Activated CD4-positive, alpha-beta memory T cell treated with anti-CD3 and anti-CD28 coated beads, Interleukin-2, amount 10 ng/mL, durations not matched to agents 7 days and 5 days (primary cell): ENCODE measurements at regions of chr7 and their contacts with region 1.

Region 1: DNA sequence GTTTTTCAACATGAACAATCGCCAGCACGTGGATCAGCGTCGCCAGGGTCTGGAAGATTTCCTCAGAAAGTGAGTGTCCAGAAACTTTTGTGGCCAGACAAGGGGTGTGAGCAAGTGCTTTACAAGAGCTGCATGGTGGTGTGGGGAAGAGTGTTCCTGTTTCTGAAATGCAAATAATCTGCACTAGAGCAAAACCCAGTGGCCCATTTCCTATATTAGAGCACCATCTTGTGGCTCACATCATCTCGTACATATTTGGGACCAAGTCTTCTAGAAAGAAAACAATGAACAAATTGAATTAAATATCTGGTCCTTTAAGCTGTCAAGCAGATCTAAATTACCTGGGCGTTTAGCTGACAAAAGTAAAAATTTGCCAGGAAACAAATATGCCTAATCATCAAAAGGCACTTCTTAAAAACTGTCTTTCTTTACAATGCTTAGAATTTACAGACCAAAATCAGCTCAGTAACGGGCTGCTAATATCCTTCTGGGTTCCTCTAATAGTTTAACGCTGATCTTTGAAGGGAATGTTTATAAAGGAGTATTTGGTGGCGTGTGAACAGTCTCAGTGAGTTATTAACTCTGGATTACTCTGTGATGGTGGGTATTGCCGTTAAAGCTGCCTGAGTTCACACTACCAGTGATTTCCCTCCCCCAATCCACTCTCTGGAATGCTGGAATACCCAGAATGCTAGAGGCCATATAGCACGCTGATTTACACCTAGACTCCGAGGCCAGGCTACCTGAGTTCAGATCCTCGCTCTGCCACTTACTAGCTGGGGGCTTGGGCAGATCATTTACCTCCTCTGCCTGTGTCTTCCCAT is 73.6 kb downstream of the SNX10 start:
- DNase-seq: peak; percentile 58
- H3K4me3 Mint-ChIP-seq: no peak overlapping the region
- H3K27ac Mint-ChIP-seq: no peak overlapping the region
- H3K4me1 Mint-ChIP-seq: peaks cover 17% of the 10 kb centered on the region
- H3K27me3 Mint-ChIP-seq: no peaks in the 10 kb centered on the region

Region 2: DNA sequence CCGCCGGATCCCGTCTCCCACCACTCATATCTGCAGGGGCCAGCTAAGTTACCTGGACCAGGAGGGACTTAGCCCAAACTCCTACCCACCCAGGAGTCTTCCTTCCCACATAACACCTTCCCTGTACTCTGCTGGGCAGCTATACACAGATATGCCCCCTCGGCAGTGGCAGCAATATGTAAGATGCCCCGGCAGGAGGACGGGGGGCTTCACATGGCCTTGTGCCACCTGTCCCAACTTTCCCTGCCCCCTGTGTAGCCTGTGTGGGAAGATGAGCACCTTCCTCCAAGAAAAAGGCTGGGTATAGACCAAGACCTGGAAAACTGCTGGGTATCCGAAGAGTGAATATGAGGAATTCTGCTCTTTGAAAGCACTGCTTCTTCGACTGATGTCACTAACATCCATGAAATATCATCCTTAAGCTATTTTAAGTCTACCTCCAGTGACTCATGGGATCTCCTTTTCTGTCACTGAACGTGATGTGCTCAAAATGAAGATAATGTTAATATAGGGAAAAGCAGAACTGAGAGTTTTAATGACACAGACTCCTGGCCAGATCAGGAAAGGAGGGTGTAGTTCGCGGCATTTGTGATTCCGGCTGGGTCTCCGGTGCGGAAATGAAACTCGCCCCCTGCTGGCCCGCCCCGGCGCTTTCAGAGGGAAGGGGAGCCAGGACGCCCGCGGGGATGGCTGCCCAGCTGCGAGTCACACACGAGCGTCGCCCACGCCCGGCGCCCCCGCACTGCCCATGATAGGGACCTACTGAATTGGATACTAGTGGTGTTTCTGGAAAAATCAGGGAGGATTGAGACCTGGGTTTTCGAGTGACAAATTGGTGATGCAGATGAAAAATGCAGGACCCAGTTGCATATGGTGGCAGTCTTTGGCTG is 470.1 kb before region 1 on chr7:
- CTCF ChIA-PET with region 1: interaction called, 39 read pairs
- POLR2A ChIA-PET with region 1: interaction called, 7 read pairs
- DNase-seq: peak; percentile 62
- H3K4me3 Mint-ChIP-seq: no peak overlapping the region
- H3K27ac Mint-ChIP-seq: no peak overlapping the region
- H3K4me1 Mint-ChIP-seq: peaks cover 28% of the 10 kb centered on the region
- H3K27me3 Mint-ChIP-seq: peaks cover 4% of the 10 kb centered on the region

Region 3: DNA sequence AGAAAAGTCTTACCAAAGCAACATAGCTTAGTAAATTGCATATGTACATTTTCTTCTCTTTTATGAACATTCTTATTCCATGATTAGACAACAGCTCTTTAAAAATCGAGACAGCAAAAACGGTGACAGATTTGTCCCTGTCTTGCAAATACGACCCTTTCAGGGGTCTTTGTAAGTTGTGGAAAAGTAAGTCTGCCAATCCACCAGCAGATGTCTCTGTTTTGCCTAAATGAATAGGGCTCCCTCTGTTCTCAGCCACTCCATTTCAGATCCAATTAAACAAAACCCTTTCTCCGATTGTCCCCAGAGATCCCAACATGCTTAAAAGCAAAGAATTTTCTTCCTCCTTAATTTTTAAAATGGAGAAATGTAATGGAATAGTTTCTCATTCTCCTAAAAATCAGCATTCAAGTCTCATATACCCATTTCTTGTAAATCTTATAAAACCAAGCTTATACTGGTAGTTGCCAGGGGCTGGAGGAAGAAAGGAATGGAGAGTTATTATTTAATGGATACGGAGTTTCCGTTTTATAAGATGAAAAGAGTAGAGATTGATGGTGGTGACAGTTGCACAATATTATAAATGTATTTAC is 274.3 kb before region 1 on chr7:
- CTCF ChIA-PET with region 1: interaction called, 68 read pairs
- POLR2A ChIA-PET with region 1: no interaction called
- DNase-seq: no peak
- H3K4me3 Mint-ChIP-seq: no peak overlapping the region
- H3K27ac Mint-ChIP-seq: no peak overlapping the region
- H3K4me1 Mint-ChIP-seq: peaks cover 15% of the 10 kb centered on the region
- H3K27me3 Mint-ChIP-seq: no peaks in the 10 kb centered on the region

Region 4: GRCh38 chr7:26193432-26194207 is 171.7 kb before region 1 on chr7:
- CTCF ChIA-PET with region 1: interaction called, 20 read pairs
- POLR2A ChIA-PET with region 1: interaction called, 12 read pairs
- DNase-seq: no peak
- H3K4me3 Mint-ChIP-seq: peak overlapping the region; percentile 64
- H3K27ac Mint-ChIP-seq: peak overlapping the region; percentile 75
- H3K4me1 Mint-ChIP-seq: peaks cover 81% of the 10 kb centered on the region
- H3K27me3 Mint-ChIP-seq: no peaks in the 10 kb centered on the region

Region 5: DNA sequence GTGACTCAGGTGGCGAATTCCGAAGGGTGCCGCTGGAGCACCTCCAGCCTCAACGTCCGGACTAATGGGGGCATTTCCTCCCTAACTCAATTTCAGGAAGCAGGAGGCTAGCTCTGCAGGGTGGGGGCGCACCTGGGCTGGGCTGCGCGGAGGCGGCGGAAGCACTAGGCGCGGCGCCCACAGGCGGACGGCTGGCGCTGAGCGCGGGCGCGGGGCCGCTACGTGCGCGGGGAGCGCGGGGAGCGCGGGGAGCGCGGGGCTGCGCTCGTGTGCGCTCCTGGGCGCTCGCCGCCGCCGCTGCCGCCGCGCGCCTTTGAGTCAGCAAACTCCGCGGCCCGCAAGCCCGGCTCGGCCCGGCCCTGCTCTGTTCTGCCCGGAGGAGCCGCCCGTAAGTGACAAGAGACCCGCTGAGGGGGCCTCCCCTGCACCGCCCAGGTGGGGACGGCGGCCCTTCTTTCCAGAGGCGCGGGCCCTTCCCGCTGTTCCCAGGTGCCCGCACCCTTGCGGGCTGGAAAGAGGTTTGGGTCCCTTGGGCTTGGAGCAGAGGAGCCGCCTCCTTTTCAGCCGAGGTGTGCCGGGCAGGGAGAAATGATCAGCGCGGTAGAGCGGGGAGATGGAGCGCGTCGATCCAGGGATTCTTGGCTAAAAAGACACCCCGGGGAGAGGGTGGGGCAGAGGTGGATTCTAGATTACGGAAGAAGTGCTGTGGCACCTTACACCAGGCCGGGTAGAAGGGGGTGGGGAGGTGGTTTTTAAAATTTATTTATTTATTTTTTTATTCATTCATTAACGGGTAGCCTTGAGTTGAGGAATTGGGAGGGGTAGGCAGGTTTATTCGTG is 73.4 kb before region 1 on chr7 and contains the start of gene SNX10:
- CTCF ChIA-PET with region 1: interaction called, 12 read pairs
- POLR2A ChIA-PET with region 1: interaction called, 5 read pairs
- DNase-seq: peak; percentile 78
- H3K4me3 Mint-ChIP-seq: peak within 1 kb of the TSS; percentile 96
- H3K27ac Mint-ChIP-seq: peak within 1 kb of the TSS; percentile 90
- H3K4me1 Mint-ChIP-seq: peaks cover 39% of the 10 kb centered on the region
- H3K27me3 Mint-ChIP-seq: peaks cover 4% of the 10 kb centered on the region
- total RNA-seq, gene SNX10: 42.4 to 45.7 TPM

Region 6: GRCh38 chr7:26323716-26324115 is 41.6 kb before region 1 on chr7:
- CTCF ChIA-PET with region 1: no interaction called
- POLR2A ChIA-PET with region 1: no interaction called
- DNase-seq: no peak
- H3K4me3 Mint-ChIP-seq: no peak overlapping the region
- H3K27ac Mint-ChIP-seq: no peak overlapping the region
- H3K4me1 Mint-ChIP-seq: peaks cover 7% of the 10 kb centered on the region
- H3K27me3 Mint-ChIP-seq: no peaks in the 10 kb centered on the region

Region 7: GRCh38 chr7:26398756-26399501 is 33.6 kb after region 1 on chr7:
- CTCF ChIA-PET with region 1: interaction called, 12 read pairs
- POLR2A ChIA-PET with region 1: no interaction called
- DNase-seq: peak; percentile 25
- H3K4me3 Mint-ChIP-seq: peak overlapping the region; percentile 86
- H3K27ac Mint-ChIP-seq: no peak overlapping the region
- H3K4me1 Mint-ChIP-seq: peaks cover 14% of the 10 kb centered on the region
- H3K27me3 Mint-ChIP-seq: peaks cover 51% of the 10 kb centered on the region

Region 8: GRCh38 chr7:26429168-26429567 is 63.9 kb after region 1 on chr7:
- CTCF ChIA-PET with region 1: no interaction called
- POLR2A ChIA-PET with region 1: no interaction called
- DNase-seq: no peak
- H3K4me3 Mint-ChIP-seq: no peak overlapping the region
- H3K27ac Mint-ChIP-seq: no peak overlapping the region
- H3K4me1 Mint-ChIP-seq: no peaks in the 10 kb centered on the region
- H3K27me3 Mint-ChIP-seq: peaks cover 25% of the 10 kb centered on the region

Region 9: DNA sequence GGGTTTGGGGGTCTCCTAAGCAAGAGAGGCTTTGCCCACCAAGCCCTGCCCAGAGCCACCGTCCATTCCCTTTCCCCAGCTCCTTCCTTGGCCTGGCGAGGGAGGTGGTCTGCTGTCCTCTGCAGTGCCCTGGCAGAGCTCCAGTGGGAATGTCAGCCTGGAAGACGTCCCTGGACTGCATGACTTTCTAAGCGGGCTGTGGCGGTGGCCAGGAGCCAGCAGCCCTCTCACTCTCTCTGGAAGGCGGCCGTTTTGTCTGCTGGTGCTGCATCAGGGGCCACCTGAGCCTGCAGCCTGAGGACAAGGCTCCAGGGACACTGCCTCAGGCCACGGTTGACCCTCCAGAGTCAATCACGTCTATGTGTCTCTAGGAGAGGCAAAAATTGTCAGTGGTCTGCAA is 228.1 kb after region 1 on chr7:
- CTCF ChIA-PET with region 1: no interaction called
- POLR2A ChIA-PET with region 1: no interaction called
- DNase-seq: no peak
- H3K4me3 Mint-ChIP-seq: no peak overlapping the region
- H3K27ac Mint-ChIP-seq: no peak overlapping the region
- H3K4me1 Mint-ChIP-seq: no peaks in the 10 kb centered on the region
- H3K27me3 Mint-ChIP-seq: peaks cover 28% of the 10 kb centered on the region

Region 10: DNA sequence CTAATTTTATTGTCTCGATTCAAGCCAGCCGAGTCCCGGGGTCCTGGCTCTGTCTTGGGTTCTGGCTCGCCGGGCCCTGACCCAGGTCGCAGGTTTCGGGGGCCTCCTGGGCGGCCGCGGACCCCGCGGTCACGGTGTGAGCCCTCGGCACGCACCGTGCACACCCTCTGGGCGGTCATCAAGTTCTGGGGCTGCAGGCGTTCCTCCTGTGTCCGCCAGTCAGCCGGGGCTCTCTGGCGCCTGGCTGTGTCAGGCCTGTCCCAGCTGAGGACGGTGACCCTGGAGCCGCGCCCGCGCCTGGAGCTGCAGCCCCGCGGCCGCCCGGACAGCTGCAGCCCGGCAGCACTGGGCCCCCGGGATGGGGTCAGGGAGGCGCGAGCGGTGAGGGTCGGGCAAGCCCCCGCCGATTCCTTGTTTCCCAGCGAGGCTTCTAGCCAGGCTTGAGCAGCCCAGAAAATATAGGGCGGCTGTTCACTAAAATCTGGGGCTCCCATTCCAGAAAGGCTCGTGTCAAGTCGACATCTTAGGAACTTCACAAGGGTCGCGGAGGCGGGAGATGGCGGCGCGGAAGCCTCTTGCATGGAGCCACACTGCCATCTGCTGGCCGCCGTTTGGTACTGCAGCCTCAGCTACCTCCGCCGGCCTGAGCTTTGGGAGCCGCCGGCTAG is 795.4 kb after region 1 on chr7:
- CTCF ChIA-PET with region 1: interaction called, 11 read pairs
- POLR2A ChIA-PET with region 1: no interaction called
- DNase-seq: peak; percentile 79
- H3K4me3 Mint-ChIP-seq: peak overlapping the region; percentile 53
- H3K27ac Mint-ChIP-seq: no peak overlapping the region
- H3K4me1 Mint-ChIP-seq: peaks cover 18% of the 10 kb centered on the region
- H3K27me3 Mint-ChIP-seq: peaks cover 84% of the 10 kb centered on the region